Heart left ventricle (tissue), 16 donors: ENCODE measurements at regions of chr20 and their contacts with region 1.

Region 1: GRCh38 chr20:34768096-34768495 is 57.4 kb downstream of the NCOA6 start:
- DNase-seq: no peak
- ATAC-seq: no peak
- H3K4me3 ChIP-seq: no peak overlapping the region
- H3K27ac ChIP-seq: no peak overlapping the region
- H3K4me1 ChIP-seq: peaks cover 0 to 10% (median 0%) of the 10 kb centered on the region in 12 donors
- H3K27me3 ChIP-seq: no peaks in the 10 kb centered on the region
- CTCF ChIP-seq: no peak
- POLR2A ChIP-seq: no peak

Region 2: DNA sequence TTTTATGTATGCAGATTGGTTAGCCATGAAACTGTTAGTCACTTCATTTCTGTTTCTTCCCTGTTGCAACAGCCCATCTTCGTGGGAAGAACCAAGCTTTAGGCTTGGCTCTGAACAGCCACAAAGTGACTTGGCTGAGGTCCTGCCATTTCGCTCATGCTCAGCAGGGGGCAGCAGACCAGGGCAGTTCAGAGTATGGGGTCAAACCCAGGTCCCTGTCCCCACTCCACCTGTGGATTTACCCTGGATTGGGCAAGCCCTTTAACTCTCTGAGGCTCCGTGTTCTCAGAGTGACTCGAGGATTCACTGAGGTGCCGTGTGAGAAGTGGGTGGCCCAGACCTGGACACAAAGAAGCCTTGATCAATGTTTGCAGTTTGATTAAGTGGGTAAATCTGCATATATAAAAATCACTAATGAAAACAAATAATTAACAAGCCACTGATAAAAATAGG is 229.4 kb before region 1 on chr20:
- intact Hi-C with region 1: loop called in 5 of 10 experiments (anchors 5 to 10 kb)
- DNase-seq: peak in 3 of 5 donors; percentile 26 to 63 (median 59)
- ATAC-seq: peak in 3 of 4 donors; percentile 43 to 65 (median 65)
- H3K4me3 ChIP-seq: no peak overlapping the region
- H3K27ac ChIP-seq: no peak overlapping the region
- H3K4me1 ChIP-seq: peaks cover 0 to 15% (median 6%) of the 10 kb centered on the region in 12 donors
- H3K27me3 ChIP-seq: no peaks in the 10 kb centered on the region
- CTCF ChIP-seq: peak; percentile 64 to 87 (median 75)
- POLR2A ChIP-seq: no peak

Region 3: DNA sequence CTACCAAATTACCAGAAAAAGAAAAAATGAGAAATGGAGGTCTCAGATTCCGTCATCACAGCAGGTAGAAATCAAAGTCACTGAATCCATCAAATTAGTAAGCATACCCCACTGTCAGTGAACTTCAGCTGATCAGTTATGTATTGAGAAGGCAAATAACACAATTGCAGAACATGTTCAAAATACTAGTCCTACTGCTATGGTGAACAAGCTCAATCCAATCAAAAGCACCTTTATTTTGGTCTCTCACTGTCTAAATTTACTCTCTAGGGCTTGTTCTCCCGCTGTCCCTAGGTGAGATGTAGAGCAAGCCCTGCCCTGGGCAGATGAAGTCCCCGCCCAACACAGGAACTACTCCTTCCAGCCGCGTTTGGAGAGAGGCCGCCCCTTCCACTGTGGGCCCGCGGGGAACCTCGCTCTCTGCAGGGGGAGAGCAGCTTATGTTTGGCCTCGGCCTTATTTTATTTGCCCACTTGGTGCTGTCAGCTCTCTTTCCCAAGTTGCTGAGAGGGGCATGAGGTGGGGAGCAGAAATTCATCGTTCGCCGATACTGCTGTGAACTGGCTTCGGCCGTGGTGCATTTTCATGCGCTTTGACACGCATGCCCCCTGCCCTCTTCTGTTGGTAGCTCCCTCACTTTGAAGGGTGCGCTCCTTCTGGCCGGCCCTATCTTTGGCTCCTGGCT is 223.8 kb before region 1 on chr20:
- intact Hi-C with region 1: loop called in 5 of 10 experiments (anchors 5 to 10 kb)
- DNase-seq: peak in 1 of 5 donors; percentile 24
- ATAC-seq: peak in 3 of 4 donors; percentile 56 to 62 (median 59)
- H3K4me3 ChIP-seq: peak overlapping the region in 6 of 12 donors; percentile 4 to 33 (median 18)
- H3K27ac ChIP-seq: no peak overlapping the region
- H3K4me1 ChIP-seq: peaks cover 0 to 21% (median 7%) of the 10 kb centered on the region in 12 donors
- H3K27me3 ChIP-seq: no peaks in the 10 kb centered on the region
- CTCF ChIP-seq: no peak
- POLR2A ChIP-seq: no peak

Region 4: DNA sequence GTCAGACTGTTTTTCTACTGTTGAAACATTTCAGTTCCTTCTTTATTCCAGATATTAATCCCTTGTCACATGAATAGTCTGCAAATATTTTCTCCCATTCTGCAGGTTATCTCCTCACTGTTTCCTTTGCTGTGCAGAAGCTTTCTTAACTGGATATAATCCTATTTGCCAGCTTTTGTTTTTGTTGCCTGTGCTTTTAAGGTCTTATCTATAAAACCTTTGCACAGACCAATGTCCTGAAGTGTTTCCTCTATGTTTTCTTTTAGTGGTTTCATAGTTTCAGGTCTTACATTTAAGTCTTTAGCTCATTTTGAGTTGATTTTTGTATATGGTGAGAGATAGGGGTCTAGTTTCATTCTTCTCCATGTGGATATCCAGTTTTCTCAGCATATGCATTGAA is 38.2 kb after region 1 on chr20:
- intact Hi-C with region 1: no loop called
- DNase-seq: no peak
- ATAC-seq: no peak
- H3K4me3 ChIP-seq: no peak overlapping the region
- H3K27ac ChIP-seq: no peak overlapping the region
- H3K4me1 ChIP-seq: peaks cover 0 to 18% (median 0%) of the 10 kb centered on the region in 12 donors
- H3K27me3 ChIP-seq: no peaks in the 10 kb centered on the region
- CTCF ChIP-seq: no peak
- POLR2A ChIP-seq: no peak